ENCODE measurements at regions of chrX and their contacts with region 1.

Region 1: GRCh38 chrX:155216179-155216939 is at the start of gene VBP1:
- DNase-seq: peak; percentile 72 to 93 (median 82)
- ATAC-seq: peak; percentile 97 to 98
- H3K4me3 Mint-ChIP-seq: peak within 1 kb of the TSS; percentile 88 to 98 (median 96)
- H3K27ac Mint-ChIP-seq: peak within 1 kb of the TSS; percentile 90 to 97 (median 94)
- H3K4me1 Mint-ChIP-seq: peaks cover 9 to 28% (median 24%) of the 10 kb centered on the region in 4 donors
- H3K27me3 Mint-ChIP-seq: no peaks in the 10 kb centered on the region
- polyA plus RNA-seq, gene VBP1: 78.9 to 112 (median 99.8) TPM

Region 2: GRCh38 chrX:155188786-155189185 is 27.6 kb before region 1 on chrX:
- POLR2A ChIA-PET with region 1: interaction called, 20 read pairs
- DNase-seq: peak in 9 of 10 donors; percentile 0 to 71 (median 39)
- ATAC-seq: peak; percentile 100
- H3K4me3 Mint-ChIP-seq: peak overlapping the region; percentile 45 to 82 (median 70)
- H3K27ac Mint-ChIP-seq: peak overlapping the region; percentile 63 to 90 (median 82)
- H3K4me1 Mint-ChIP-seq: peaks cover 17 to 50% (median 40%) of the 10 kb centered on the region in 4 donors
- H3K27me3 Mint-ChIP-seq: no peaks in the 10 kb centered on the region